ENCODE measurements at regions of chr18 and their contacts with region 1.

Region 1: DNA sequence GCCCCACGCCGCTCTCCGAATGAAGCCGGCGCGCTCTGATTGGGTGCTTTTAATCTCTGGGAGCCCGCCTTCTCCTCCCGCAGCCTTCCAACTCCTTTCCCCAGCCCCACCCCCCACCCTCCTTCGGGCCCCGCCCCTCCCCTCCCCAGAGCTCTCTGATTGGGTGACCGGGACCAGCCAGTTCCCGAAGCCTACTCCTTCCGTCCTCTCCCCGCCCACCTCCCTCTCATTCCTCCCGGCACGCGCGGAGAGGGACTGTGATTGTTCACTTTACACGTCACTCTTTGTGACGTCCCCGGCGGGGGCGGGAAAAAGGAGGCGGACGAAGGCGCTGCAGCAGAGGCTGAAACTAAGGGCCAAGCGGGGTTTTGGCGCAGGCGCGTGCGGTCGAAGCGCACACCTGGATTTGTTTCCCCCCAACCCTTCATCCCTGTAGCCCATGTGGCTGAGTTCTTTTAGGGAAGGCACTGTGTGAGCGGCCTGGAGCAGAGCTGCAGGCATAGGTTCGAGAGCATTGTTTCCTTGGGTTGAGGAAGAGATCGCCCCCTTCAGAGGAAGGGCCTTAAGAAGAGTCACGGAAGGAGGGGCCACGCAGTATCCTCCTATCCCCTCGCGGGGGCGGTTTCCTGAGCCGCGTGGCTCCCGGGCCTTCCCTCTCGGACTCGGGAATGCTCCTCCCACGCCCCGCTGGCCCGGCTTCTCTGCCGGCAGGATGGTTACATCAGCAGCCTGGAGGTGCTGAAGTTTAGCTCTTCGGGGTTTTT is at the start of gene MEX3C:
- DNase-seq: peak; percentile 99
- H3K4me3 Mint-ChIP-seq: peak within 1 kb of the TSS; percentile 80
- H3K27ac Mint-ChIP-seq: peak within 1 kb of the TSS; percentile 100
- H3K4me1 Mint-ChIP-seq: peaks cover 9% of the 10 kb centered on the region
- H3K27me3 Mint-ChIP-seq: no peaks in the 10 kb centered on the region
- CTCF ChIP-seq: peak; percentile 25
- total RNA-seq, gene MEX3C: 71.5 and 86.9 TPM in 2 replicates

Region 2: DNA sequence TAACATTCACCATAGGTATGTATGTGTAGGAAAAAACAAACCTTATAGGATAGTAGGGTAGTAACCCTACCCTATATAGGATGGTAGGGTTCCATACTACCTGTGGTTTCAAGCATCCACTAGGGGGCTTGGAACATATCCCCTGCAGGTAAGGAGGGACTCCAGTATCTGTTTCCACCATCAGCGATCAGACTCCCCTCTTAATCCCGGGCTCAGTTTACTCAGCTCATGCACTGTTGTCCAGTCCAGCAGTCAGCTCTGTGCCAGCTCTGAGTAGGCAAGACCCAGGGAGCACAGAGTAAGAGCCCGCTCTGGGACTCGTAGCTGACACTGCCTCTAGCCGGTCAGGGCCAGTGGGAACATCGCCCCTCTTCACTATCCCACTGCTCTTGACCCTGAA is 62.0 kb before region 1 on chr18:
- CTCF ChIA-PET with region 1: no interaction called
- intact Hi-C with region 1: no loop called
- DNase-seq: peak; percentile 25
- H3K4me3 Mint-ChIP-seq: no peak overlapping the region
- H3K27ac Mint-ChIP-seq: no peak overlapping the region
- H3K4me1 Mint-ChIP-seq: peaks cover 10% of the 10 kb centered on the region
- H3K27me3 Mint-ChIP-seq: no peaks in the 10 kb centered on the region
- CTCF ChIP-seq: peak; percentile 55

Region 3: DNA sequence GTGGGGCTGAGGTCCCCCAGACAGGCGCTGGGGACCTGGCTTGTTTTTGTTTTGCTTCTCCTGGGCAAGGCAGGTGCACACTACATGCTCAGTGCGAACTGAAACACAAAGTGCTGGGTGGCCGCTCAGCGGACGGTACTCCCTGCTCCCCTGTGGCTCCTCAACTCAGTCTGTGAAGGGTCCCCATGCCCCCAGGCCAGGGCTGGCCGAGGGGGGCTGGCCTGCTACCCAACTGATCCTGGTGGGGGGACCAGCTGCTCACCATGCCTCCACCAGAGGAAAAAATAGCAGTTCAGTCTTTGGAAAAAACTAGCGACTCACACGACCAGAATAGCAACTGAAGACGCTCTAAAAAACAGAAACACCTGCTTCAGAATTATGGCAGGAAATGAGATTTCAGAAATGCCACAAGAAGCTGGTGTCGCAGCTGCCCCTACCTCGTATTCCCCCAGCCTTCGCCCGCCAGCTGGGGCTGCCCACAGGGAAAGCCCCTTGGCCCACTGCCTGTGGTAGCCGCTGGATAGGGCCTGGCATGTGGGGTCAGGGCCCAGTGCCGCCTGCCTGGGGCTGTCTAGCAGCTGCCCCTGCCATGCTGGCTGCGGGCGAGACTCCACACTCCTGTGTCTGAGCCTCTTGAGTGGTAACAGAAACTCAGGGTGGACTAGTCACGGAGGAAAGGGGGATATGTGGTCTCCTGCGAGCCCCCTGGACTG is 44.0 kb before region 1 on chr18:
- CTCF ChIA-PET with region 1: no interaction called
- intact Hi-C with region 1: loop called (anchors 2 kb)
- DNase-seq: no peak
- H3K4me3 Mint-ChIP-seq: no peak overlapping the region
- H3K27ac Mint-ChIP-seq: no peak overlapping the region
- H3K4me1 Mint-ChIP-seq: peaks cover 17% of the 10 kb centered on the region
- H3K27me3 Mint-ChIP-seq: no peaks in the 10 kb centered on the region
- CTCF ChIP-seq: no peak

Region 4: DNA sequence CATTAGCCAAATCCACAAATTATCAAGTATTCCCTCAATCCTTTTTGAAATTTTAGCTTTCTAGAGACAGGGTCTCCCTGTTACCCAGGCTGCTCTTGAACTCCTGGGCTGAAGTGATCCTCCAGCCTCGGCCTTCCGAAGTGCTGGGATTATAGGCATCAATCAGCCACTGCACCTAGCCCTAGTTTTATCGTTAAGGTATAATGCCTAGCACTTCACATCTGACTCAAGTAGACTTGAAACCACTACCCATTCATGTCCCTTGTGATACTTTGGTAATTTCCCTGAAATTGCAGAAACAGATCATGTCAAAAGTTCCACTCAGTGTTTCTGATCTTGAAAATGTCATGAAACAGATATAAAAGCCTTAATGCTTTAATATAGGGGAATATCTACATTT is 26.6 kb before region 1 on chr18:
- CTCF ChIA-PET with region 1: no interaction called
- intact Hi-C with region 1: no loop called
- DNase-seq: no peak
- H3K4me3 Mint-ChIP-seq: no peak overlapping the region
- H3K27ac Mint-ChIP-seq: no peak overlapping the region
- H3K4me1 Mint-ChIP-seq: peaks cover 7% of the 10 kb centered on the region
- H3K27me3 Mint-ChIP-seq: no peaks in the 10 kb centered on the region
- CTCF ChIP-seq: no peak

Region 5: GRCh38 chr18:51235011-51235789 is 37.4 kb after region 1 on chr18:
- CTCF ChIA-PET with region 1: interaction called, 4 read pairs
- intact Hi-C with region 1: loop called (anchors 2 kb)
- DNase-seq: peak; percentile 63
- H3K4me3 Mint-ChIP-seq: peak overlapping the region; percentile 49
- H3K27ac Mint-ChIP-seq: peak overlapping the region; percentile 94
- H3K4me1 Mint-ChIP-seq: peaks cover 45% of the 10 kb centered on the region
- H3K27me3 Mint-ChIP-seq: no peaks in the 10 kb centered on the region
- CTCF ChIP-seq: no peak

Region 6: GRCh38 chr18:51342820-51343219 is 145.0 kb after region 1 on chr18:
- CTCF ChIA-PET with region 1: no interaction called
- intact Hi-C with region 1: loop called (anchors 2 kb)
- DNase-seq: peak; percentile 61
- H3K4me3 Mint-ChIP-seq: no peak overlapping the region
- H3K27ac Mint-ChIP-seq: no peak overlapping the region
- H3K4me1 Mint-ChIP-seq: no peaks in the 10 kb centered on the region
- H3K27me3 Mint-ChIP-seq: peaks cover 8% of the 10 kb centered on the region
- CTCF ChIP-seq: no peak